ENCODE measurements at regions of chr12 and their contacts with region 1.

Region 1: GRCh38 chr12:68223083-68223747 is 2.4 kb downstream of the IL26 start:
- DNase-seq: peak; percentile 56 to 92 (median 82)

Region 2: DNA sequence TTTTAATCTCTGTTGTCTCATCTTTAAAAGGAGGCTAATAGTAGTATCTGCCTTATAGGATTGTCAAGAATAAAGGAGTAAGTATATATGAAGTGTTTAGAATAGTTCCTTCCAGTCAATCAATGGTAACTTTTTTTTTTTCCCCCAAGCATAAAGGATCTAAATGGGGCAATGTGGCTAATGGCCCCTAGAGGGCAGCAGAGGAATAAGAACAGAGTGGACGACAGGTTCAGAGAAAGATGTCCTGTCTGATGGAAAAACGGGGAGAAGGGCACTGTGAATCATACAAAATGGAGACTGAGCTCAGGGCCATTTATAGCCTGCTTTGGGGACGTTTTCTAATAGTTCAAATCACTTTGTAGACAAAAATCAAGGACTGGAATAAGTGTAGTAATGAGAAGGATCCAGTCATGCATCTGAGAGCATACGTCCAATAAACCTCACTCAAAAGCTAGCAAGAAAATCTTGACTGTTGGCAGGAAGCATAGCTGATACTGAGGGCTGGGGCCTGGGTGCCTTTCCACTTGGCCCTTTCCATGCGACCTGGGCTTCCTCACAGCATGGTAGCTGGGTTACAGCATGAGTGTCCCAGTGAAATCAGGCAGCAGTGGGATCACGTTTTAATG is 182.7 kb before region 1 on chr12:
- intact Hi-C with region 1: loop called (anchors 10 kb)
- DNase-seq: peak; percentile 6 to 91 (median 74)